ENCODE measurements at regions of chr5 and their contacts with region 1.

Region 1: DNA sequence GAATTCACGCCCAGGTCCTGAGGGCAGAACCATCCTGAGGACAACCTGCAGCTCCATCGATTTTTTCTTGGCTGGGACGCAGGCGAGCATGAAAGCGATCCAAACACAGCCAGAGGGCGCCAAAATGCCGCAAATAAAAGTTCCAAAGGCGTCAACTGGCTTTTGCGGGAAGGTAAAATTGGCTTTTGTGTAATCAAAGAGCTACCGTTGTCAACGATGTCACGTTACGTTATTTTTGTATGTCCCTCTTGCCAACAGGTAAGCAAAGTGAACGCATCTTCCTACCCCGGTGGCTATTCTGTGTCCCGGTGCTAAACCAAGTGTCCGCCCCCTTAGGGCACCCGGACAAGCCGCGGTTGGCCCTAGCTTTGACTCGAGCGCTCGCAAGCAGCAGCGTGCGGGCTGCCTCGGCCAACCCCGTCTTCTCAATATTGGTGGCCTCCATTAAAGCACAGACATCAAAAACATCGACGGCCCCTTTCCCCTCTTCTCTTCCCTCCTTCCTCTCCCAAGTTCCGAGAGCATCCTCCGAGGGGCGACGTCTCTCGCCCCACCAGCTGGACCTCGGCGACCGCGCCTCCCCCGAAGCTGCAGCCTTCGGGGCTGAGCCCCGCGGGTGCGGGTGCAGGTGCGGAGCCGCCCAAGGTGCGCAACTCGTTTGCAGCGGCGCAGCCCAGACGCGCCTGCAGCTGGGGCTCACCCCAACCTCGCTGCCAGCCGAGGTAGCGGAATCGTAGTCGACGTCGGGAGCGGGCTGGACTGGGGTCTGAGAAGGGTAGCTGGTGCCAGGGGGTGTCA is 1.1 kb upstream of the BASP1 start:
- DNase-seq: peak; percentile 42
- H3K4me3 Mint-ChIP-seq: no peak overlapping the region
- H3K27ac Mint-ChIP-seq: no peak overlapping the region
- H3K4me1 Mint-ChIP-seq: no peaks in the 10 kb centered on the region
- H3K27me3 Mint-ChIP-seq: peaks cover 40% of the 10 kb centered on the region

Region 2: DNA sequence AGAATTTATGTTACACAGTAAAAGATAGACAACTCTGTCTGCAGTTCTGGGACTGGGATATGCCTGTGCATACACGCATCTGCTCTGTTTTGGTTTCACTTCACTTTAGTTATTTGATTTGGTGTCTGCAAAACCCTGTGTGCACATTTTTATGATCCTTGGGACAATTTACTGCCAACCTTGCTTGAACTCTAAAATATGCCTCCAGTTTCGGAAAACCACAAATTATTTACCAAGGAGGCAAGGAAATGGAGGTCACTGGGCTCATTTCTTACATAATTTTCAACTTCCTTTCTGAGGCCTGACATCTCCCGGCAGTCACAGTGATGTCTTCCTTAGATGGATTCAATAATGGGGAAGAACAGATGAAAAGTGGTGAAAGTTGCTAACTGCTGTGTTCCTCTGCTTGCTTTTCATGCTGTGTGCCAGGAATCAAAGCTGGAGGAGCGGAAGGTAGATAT is 220.4 kb after region 1 on chr5:
- CTCF ChIA-PET with region 1: no interaction called
- POLR2A ChIA-PET with region 1: no interaction called
- DNase-seq: no peak
- H3K4me3 Mint-ChIP-seq: no peak overlapping the region
- H3K27ac Mint-ChIP-seq: no peak overlapping the region
- H3K4me1 Mint-ChIP-seq: no peaks in the 10 kb centered on the region
- H3K27me3 Mint-ChIP-seq: no peaks in the 10 kb centered on the region

Region 3: GRCh38 chr5:18305297-18305924 is 1089.0 kb after region 1 on chr5:
- CTCF ChIA-PET with region 1: interaction called, 14 read pairs
- POLR2A ChIA-PET with region 1: no interaction called
- DNase-seq: no peak
- H3K4me3 Mint-ChIP-seq: no peak overlapping the region
- H3K27ac Mint-ChIP-seq: no peak overlapping the region
- H3K4me1 Mint-ChIP-seq: no peaks in the 10 kb centered on the region
- H3K27me3 Mint-ChIP-seq: no peaks in the 10 kb centered on the region